Testis (tissue), 5 donors: ENCODE measurements at regions of chr22 and their contacts with region 1.

Region 1: GRCh38 chr22:45553351-45554039 is 50.8 kb downstream of the FBLN1 start:
- DNase-seq: peak; percentile 85
- H3K4me3 ChIP-seq: no peak overlapping the region
- H3K27ac ChIP-seq: peak overlapping the region; percentile 55 to 70
- H3K4me1 ChIP-seq: peaks cover 40% of the 10 kb centered on the region
- H3K27me3 ChIP-seq: no peaks in the 10 kb centered on the region
- CTCF ChIP-seq: peak; percentile 87 to 95 (median 95)
- POLR2A ChIP-seq: no peak

Region 2: GRCh38 chr22:45268958-45269844 is 284.3 kb before region 1 on chr22:
- intact Hi-C with region 1: loop called (anchors 10 kb)
- DNase-seq: peak; percentile 90
- H3K4me3 ChIP-seq: peak overlapping the region; percentile 45 to 65
- H3K27ac ChIP-seq: peak overlapping the region in 1 of 2 donors; percentile 25
- H3K4me1 ChIP-seq: peaks cover 14% of the 10 kb centered on the region
- H3K27me3 ChIP-seq: no peaks in the 10 kb centered on the region
- CTCF ChIP-seq: peak; percentile 97 to 99 (median 98)
- POLR2A ChIP-seq: no peak

Region 3: DNA sequence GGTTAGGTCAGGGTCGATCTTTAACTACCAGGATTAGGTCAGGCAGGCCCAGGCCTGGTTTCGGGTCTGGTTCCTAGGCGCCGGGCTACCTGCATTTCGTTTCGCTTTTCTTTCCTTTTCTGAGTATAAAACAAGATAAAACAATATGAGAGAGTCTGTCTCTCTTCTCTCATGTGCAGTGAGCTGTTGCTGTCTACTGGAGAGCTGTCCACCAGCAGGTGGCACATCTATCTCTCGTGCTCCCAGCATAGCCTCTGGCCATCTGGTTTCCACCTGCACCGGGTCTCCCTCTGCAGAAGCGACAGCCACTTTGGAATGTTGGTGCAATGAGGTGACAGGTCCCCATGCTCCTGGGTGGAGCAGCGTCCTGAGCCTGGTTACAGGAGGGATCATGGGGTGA is 112.4 kb before region 1 on chr22:
- intact Hi-C with region 1: loop called (anchors 10 kb)
- DNase-seq: peak; percentile 82
- H3K4me3 ChIP-seq: no peak overlapping the region
- H3K27ac ChIP-seq: no peak overlapping the region
- H3K4me1 ChIP-seq: peaks cover 4% of the 10 kb centered on the region
- H3K27me3 ChIP-seq: no peaks in the 10 kb centered on the region
- CTCF ChIP-seq: peak; percentile 58 to 72 (median 71)
- POLR2A ChIP-seq: no peak

Region 4: GRCh38 chr22:45742866-45743450 is 189.5 kb after region 1 on chr22:
- intact Hi-C with region 1: no loop called
- DNase-seq: no peak
- H3K4me3 ChIP-seq: no peak overlapping the region
- H3K27ac ChIP-seq: no peak overlapping the region
- H3K4me1 ChIP-seq: no peaks in the 10 kb centered on the region
- H3K27me3 ChIP-seq: no peaks in the 10 kb centered on the region
- CTCF ChIP-seq: no peak
- POLR2A ChIP-seq: no peak